ENCODE measurements at regions of chr1 and their contacts with region 1.

Region 1: DNA sequence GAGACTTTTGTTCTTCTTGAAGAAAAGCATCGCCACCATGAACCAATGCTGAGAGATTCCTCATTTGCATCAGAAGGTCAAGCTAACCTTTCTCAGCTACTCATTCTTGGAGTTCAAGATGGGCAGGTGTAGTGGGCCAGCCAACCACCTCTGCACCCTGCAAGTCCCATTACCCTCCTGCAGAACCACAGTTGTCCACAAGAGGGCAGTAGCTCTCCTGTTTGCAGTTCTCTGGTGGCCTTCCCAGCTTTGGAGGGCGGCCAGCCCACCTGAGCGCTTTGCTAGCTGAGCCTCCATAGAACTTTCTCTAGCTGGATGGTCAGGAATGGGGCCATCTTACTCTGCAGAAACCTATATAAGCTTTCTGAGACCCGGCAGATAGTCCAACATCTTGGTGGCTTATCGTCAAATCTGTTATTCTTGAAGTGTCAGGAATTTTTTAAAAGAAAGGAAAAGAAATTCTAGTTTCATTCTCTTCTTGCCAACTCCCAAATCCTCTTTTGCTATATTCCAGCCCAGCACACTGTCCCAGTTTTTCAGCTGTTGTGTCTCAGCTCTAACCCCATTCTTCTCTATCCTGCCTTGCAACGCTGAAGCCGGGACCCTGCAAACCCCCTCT is 11.0 kb upstream of the LMX1A start:
- DNase-seq: peak; percentile 89
- H3K4me3 Mint-ChIP-seq: no peak overlapping the region
- H3K27ac Mint-ChIP-seq: no peak overlapping the region
- H3K4me1 Mint-ChIP-seq: peaks cover 23% of the 10 kb centered on the region
- H3K27me3 Mint-ChIP-seq: peaks cover 38% of the 10 kb centered on the region
- CTCF ChIP-seq: peak; percentile 99

Region 2: GRCh38 chr1:165129568-165130164 is 237.8 kb before region 1 on chr1:
- CTCF ChIA-PET with region 1: interaction called, 81 read pairs
- POLR2A ChIA-PET with region 1: interaction called, 3 read pairs
- intact Hi-C with region 1: no loop called
- DNase-seq: peak; percentile 91
- H3K4me3 Mint-ChIP-seq: no peak overlapping the region
- H3K27ac Mint-ChIP-seq: no peak overlapping the region
- H3K4me1 Mint-ChIP-seq: peaks cover 5% of the 10 kb centered on the region
- H3K27me3 Mint-ChIP-seq: peaks cover 82% of the 10 kb centered on the region
- CTCF ChIP-seq: peak; percentile 79

Region 3: GRCh38 chr1:165174491-165174890 is 193.0 kb before region 1 on chr1:
- CTCF ChIA-PET with region 1: interaction called, 43 read pairs
- POLR2A ChIA-PET with region 1: no interaction called
- intact Hi-C with region 1: no loop called
- DNase-seq: no peak
- H3K4me3 Mint-ChIP-seq: no peak overlapping the region
- H3K27ac Mint-ChIP-seq: no peak overlapping the region
- H3K4me1 Mint-ChIP-seq: no peaks in the 10 kb centered on the region
- H3K27me3 Mint-ChIP-seq: no peaks in the 10 kb centered on the region
- CTCF ChIP-seq: no peak

Region 4: GRCh38 chr1:165257969-165258459 is 109.5 kb before region 1 on chr1:
- CTCF ChIA-PET with region 1: interaction called, 536 read pairs
- POLR2A ChIA-PET with region 1: interaction called, 4 read pairs
- intact Hi-C with region 1: loop called (anchors 1 kb)
- DNase-seq: peak; percentile 97
- H3K4me3 Mint-ChIP-seq: no peak overlapping the region
- H3K27ac Mint-ChIP-seq: no peak overlapping the region
- H3K4me1 Mint-ChIP-seq: peaks cover 11% of the 10 kb centered on the region
- H3K27me3 Mint-ChIP-seq: peaks cover 45% of the 10 kb centered on the region
- CTCF ChIP-seq: peak; percentile 94

Region 5: GRCh38 chr1:165298203-165298820 is 69.2 kb before region 1 on chr1:
- CTCF ChIA-PET with region 1: interaction called, 75 read pairs
- POLR2A ChIA-PET with region 1: no interaction called
- intact Hi-C with region 1: no loop called
- DNase-seq: no peak
- H3K4me3 Mint-ChIP-seq: no peak overlapping the region
- H3K27ac Mint-ChIP-seq: no peak overlapping the region
- H3K4me1 Mint-ChIP-seq: no peaks in the 10 kb centered on the region
- H3K27me3 Mint-ChIP-seq: peaks cover 28% of the 10 kb centered on the region
- CTCF ChIP-seq: no peak

Region 6: DNA sequence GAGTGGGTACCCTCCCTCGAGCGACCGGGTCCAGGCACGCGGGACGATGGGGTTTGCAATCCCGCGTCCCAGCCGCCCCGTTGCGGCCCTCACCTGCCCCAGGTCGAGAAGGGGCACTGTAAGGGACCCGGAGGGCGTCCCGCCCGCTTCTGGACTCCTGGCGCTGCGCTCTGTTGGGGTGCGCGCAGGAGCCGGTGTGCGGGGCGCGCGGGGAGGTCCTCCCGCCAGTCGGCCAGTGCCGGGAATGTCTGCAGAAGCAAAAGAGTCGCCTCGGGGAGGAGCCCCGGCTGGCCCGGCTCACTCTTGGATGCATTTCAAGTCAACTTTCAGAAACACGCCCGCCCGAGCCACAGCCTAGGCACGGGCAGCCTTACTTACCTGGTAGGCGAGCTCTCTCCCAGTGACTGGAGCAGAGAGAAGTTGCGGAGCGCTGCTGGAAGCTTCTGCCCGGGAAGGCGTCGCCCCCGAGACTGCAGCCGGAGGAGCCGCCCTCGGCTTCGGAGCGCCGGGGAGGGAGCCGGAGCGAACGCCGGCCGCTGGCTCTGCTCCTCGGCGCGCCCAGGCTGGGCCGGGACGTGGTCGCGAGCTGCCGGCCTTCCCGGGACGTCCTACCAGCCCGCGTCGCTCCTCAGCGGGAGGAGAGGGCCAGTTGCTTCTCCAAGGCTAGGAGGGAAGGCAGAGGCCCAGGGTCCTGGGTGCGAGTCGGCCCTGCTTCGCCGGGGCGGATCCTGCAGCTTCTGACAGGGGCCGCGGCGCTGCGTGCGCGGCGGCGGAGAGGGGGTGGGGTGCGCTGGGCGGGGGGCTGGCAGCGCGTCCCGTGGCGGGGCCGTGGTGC is 11.3 kb before region 1 on chr1 and contains the start of gene LMX1A:
- CTCF ChIA-PET with region 1: interaction called, 340 read pairs
- POLR2A ChIA-PET with region 1: interaction called, 4 read pairs
- intact Hi-C with region 1: no loop called
- DNase-seq: no peak
- H3K4me3 Mint-ChIP-seq: no peak within 1 kb of the TSS
- H3K27ac Mint-ChIP-seq: no peak within 1 kb of the TSS
- H3K4me1 Mint-ChIP-seq: peaks cover 3% of the 10 kb centered on the region
- H3K27me3 Mint-ChIP-seq: peaks cover 40% of the 10 kb centered on the region
- CTCF ChIP-seq: no peak
- total RNA-seq, gene LMX1A: not detected in 2 replicates

Region 7: GRCh38 chr1:165586435-165586834 is 219.0 kb after region 1 on chr1:
- CTCF ChIA-PET with region 1: interaction called, 128 read pairs
- POLR2A ChIA-PET with region 1: no interaction called
- intact Hi-C with region 1: no loop called
- DNase-seq: no peak
- H3K4me3 Mint-ChIP-seq: no peak overlapping the region
- H3K27ac Mint-ChIP-seq: no peak overlapping the region
- H3K4me1 Mint-ChIP-seq: no peaks in the 10 kb centered on the region
- H3K27me3 Mint-ChIP-seq: peaks cover 59% of the 10 kb centered on the region
- CTCF ChIP-seq: no peak

Region 8: GRCh38 chr1:165738794-165739193 is 371.3 kb after region 1 on chr1:
- CTCF ChIA-PET with region 1: no interaction called
- POLR2A ChIA-PET with region 1: no interaction called
- intact Hi-C with region 1: no loop called
- DNase-seq: no peak
- H3K4me3 Mint-ChIP-seq: no peak overlapping the region
- H3K27ac Mint-ChIP-seq: no peak overlapping the region
- H3K4me1 Mint-ChIP-seq: peaks cover 10% of the 10 kb centered on the region
- H3K27me3 Mint-ChIP-seq: no peaks in the 10 kb centered on the region
- CTCF ChIP-seq: no peak

Region 9: GRCh38 chr1:166111430-166111829 is 743.9 kb after region 1 on chr1:
- CTCF ChIA-PET with region 1: no interaction called
- POLR2A ChIA-PET with region 1: no interaction called
- intact Hi-C with region 1: no loop called
- DNase-seq: no peak
- H3K4me3 Mint-ChIP-seq: no peak overlapping the region
- H3K27ac Mint-ChIP-seq: no peak overlapping the region
- H3K4me1 Mint-ChIP-seq: no peaks in the 10 kb centered on the region
- H3K27me3 Mint-ChIP-seq: no peaks in the 10 kb centered on the region
- CTCF ChIP-seq: no peak